Lower leg skin (tissue), 4 donors: ENCODE measurements at regions of chr6 and their contacts with region 1.

Region 1: DNA sequence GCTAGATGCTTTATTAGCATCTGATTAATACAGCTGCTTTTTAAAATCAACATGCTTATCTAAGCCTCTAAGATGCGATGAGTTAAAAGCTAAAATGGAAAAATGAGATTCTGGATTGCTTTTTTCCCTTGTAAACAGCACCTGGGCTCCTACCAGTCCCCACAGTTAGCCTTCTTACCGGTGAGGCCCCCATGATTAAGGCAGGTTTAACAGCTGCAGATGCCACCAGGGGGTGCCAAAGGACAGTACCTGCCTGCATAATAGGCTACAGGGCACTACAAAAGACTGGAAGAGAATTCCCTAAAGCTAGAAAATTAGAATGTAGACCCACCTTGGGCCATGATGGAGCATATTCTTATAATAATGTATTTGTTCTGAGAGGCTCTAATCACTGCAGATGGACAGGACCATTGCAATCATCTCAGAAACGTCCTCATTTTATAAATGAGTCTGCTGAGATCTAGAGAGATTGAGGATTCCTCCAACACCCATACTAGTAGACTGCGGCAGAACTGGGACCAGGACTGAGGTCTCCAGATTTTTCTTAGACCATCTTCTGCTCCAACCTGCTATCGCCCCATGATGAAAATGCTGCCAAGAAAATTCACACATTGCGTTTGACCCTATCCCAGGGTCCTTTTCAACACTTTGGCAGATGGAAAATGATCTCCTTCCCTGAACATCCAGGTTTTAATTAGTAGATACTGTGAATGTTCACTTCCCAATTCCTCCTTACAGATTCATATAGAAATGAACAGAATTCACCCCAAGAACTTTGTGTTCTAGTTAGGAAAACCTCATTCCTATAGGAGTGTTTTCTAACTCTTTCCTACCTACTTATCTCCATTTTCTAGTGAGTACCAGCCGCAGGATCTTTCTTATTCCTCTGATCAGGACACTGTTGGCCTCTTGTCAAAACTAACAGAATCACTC is 148.8 kb downstream of the RPS12 start:
- DNase-seq: peak; percentile 19 to 85
- H3K4me3 ChIP-seq: no peak overlapping the region
- CTCF ChIP-seq: no peak
- POLR2A ChIP-seq: no peak

Region 2: DNA sequence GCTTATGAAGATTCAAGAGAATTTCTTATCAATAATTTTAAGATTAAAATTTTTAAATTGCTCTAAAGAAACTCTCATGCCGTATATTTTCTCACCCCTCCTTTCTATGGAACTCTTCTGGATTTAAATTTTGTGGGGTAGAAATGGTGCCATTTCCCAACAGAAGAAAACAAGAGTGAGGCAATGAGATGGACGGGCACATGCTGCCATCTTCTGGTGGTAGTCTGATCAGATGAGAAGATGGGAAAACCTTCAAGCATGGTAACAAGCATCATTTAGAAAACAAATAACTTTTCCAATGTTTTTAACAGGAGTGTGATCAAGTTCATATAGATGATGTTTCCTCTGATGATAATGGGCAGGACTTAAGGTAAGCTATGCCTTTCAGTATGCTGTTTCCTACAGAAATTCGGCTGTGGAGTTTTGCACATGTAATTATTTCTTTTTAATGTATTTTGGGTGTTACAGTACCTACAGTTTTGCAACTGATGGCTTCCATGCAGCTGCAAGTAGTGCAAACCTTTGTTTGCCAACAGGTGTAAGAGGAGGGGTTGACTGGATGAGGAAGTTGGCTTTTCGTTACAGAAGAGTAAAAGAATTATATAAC is 549.3 kb after region 1 on chr6:
- intact Hi-C with region 1: loop called (anchors 10 kb)
- DNase-seq: no peak
- H3K4me3 ChIP-seq: no peak overlapping the region
- CTCF ChIP-seq: no peak
- POLR2A ChIP-seq: no peak